Right ventricle myocardium inferior (tissue), 1 donor: ENCODE measurements at regions of chr14 and their contacts with region 1.

Region 1: GRCh38 chr14:64303471-64303917 is 9.3 kb upstream of the ESR2 start:
- DNase-seq: no peak
- ATAC-seq: no peak

Region 2: GRCh38 chr14:63800651-63801375 is 502.7 kb before region 1 on chr14:
- intact Hi-C with region 1: loop called (anchors 2 kb)
- DNase-seq: no peak
- ATAC-seq: no peak

Region 3: DNA sequence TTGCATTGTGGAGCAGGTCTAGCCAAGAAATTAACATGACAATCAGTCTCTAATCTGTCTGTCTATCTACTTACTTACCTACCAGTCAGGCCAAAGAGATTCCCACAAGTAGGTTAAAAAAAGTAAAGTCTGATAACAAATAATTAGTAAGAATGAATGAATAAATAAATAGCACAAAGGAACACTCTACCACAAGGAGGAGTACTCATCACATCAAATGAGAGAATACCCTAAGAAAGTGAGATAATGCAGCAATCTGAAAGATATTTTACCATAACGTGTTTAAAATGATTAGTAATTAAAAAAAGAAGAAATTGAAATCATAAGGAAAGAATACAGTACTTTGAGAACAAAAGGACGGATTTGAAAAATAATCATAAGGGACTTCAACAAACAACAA is 263.4 kb before region 1 on chr14:
- intact Hi-C with region 1: loop called (anchors 10 kb)
- DNase-seq: no peak
- ATAC-seq: no peak